Transverse colon (tissue), 4 donors: ENCODE measurements at regions of chr2 and their contacts with region 1.

Region 1: GRCh38 chr2:6834163-6834562 is 31.5 kb downstream of the CMPK2 start:
- DNase-seq: no peak
- H3K4me3 ChIP-seq: no peak overlapping the region
- H3K27ac ChIP-seq: no peak overlapping the region
- H3K4me1 ChIP-seq: no peaks in the 10 kb centered on the region
- H3K27me3 ChIP-seq: no peaks in the 10 kb centered on the region
- CTCF ChIP-seq: no peak
- EP300 ChIP-seq: no peak
- POLR2A ChIP-seq: no peak

Region 2: DNA sequence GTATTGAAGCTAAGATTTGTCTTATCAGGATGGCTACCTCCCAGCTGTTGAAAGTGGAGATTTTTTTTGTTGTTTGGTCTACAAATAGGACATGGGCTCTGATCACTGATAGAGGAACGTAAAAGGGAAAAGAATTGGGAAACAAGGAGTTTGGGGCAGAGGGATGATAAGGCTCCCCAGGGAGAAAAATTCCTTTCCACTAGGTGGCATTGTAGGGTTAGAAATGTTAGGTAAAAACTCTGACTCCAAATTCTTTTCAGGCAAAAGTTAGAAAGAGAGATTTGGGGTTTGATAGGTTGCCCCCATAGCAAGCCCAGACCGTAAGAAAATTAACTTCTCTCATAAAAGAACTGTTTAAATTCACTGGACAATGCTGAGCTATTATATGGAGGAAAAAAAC is 11.7 kb after region 1 on chr2:
- in situ Hi-C with region 1: no loop called
- intact Hi-C with region 1: loop called (anchors 1 kb)
- DNase-seq: no peak
- H3K4me3 ChIP-seq: no peak overlapping the region
- H3K27ac ChIP-seq: no peak overlapping the region
- H3K4me1 ChIP-seq: no peaks in the 10 kb centered on the region
- H3K27me3 ChIP-seq: no peaks in the 10 kb centered on the region
- CTCF ChIP-seq: no peak
- EP300 ChIP-seq: no peak
- POLR2A ChIP-seq: no peak